Endothelial cell of umbilical vein (primary cell): ENCODE measurements at regions of chr18 and their contacts with region 1.

Region 1: GRCh38 chr18:48675352-48675761 is 136.5 kb downstream of the CTIF start:
- DNase-seq: peak; percentile 82
- H3K4me3 ChIP-seq: no peak overlapping the region
- H3K27ac ChIP-seq: no peak overlapping the region
- H3K4me1 ChIP-seq: peaks cover 6% of the 10 kb centered on the region
- H3K27me3 ChIP-seq: no peaks in the 10 kb centered on the region
- CTCF ChIP-seq: peak; percentile 90 to 96
- POLR2A ChIP-seq: no peak

Region 2: DNA sequence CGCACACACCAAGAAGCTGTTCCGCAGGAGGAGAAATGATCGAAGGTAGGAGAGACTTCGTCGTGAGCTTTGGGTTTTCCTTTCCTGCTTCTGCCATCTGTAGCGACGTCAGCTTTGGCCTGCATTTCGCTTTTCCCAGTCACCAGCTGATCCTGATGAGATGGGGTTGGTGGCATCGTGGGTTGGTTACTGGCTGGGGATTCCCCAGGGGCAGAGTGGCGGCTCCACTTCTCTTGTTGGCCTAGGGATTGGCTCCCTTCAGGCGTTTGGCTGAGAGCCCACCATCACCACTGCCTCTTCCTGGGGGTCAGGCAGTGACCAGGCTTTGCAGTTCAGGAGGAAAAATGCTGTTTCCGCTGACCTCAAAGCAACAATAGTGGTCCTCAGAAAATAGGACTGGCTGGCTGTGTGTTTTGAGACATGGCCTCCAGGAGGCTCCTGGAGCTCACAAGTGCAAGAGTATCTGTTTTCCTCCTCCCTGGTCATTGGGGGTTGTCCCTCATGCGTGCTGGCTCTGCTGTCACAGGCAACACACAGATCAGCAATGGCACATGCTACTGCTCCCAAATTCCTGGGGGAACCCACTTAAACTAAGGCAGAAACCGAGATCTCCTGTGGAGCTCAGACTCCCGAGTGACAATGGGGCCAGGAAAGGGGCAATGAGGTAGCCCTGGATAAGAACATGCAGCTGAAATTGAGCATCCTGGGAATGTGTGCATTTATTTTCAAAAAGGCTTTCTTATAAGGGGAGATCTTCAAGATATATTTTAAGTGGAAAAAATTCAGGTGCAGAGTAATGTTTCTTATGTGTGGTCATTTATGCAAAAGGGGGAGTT is 36.5 kb after region 1 on chr18:
- CTCF ChIA-PET with region 1: interaction called, 5 read pairs
- POLR2A ChIA-PET with region 1: no interaction called
- dilution Hi-C with region 1: no loop called
- intact Hi-C with region 1: loop called (anchors 1 kb)
- DNase-seq: peak; percentile 51
- H3K4me3 ChIP-seq: no peak overlapping the region
- H3K27ac ChIP-seq: no peak overlapping the region
- H3K4me1 ChIP-seq: peaks cover 35% of the 10 kb centered on the region
- H3K27me3 ChIP-seq: no peaks in the 10 kb centered on the region
- CTCF ChIP-seq: peak; percentile 45 to 56
- POLR2A ChIP-seq: no peak

Region 3: GRCh38 chr18:49021433-49022129 is 346.2 kb after region 1 on chr18:
- CTCF ChIA-PET with region 1: no interaction called
- POLR2A ChIA-PET with region 1: no interaction called
- dilution Hi-C with region 1: no loop called
- intact Hi-C with region 1: loop called (anchors 5 kb)
- DNase-seq: peak; percentile 19
- H3K4me3 ChIP-seq: no peak overlapping the region
- H3K27ac ChIP-seq: no peak overlapping the region
- H3K4me1 ChIP-seq: no peaks in the 10 kb centered on the region
- H3K27me3 ChIP-seq: no peaks in the 10 kb centered on the region
- CTCF ChIP-seq: peak; percentile 46 to 60
- POLR2A ChIP-seq: no peak

Region 4: GRCh38 chr18:49178736-49179135 is 503.4 kb after region 1 on chr18:
- CTCF ChIA-PET with region 1: interaction called, 16 read pairs
- POLR2A ChIA-PET with region 1: no interaction called
- dilution Hi-C with region 1: no loop called
- intact Hi-C with region 1: loop called (anchors 1 kb)
- DNase-seq: peak; percentile 37
- H3K4me3 ChIP-seq: no peak overlapping the region
- H3K27ac ChIP-seq: no peak overlapping the region
- H3K4me1 ChIP-seq: peaks cover 18% of the 10 kb centered on the region
- H3K27me3 ChIP-seq: no peaks in the 10 kb centered on the region
- CTCF ChIP-seq: peak; percentile 44 to 48
- POLR2A ChIP-seq: no peak